AG04450 (cell line): ENCODE measurements at regions of chr17 and their contacts with region 1.

Region 1: GRCh38 chr17:28552246-28552999 is at the start of gene UNC119:
- DNase-seq: no peak
- H3K4me3 ChIP-seq: peak within 1 kb of the TSS; percentile 74
- H3K27ac ChIP-seq: peak within 1 kb of the TSS; percentile 31
- H3K27me3 ChIP-seq: no peaks in the 10 kb centered on the region
- CTCF ChIP-seq: no peak
- polyA plus RNA-seq, gene UNC119: 51.2 and 54.3 TPM in 2 replicates

Region 2: GRCh38 chr17:28494445-28495188 is 57.8 kb before region 1 on chr17:
- CTCF ChIA-PET with region 1: interaction called, 15 read pairs
- POLR2A ChIA-PET with region 1: no interaction called
- DNase-seq: peak; percentile 13
- H3K4me3 ChIP-seq: no peak overlapping the region
- H3K27ac ChIP-seq: no peak overlapping the region
- H3K27me3 ChIP-seq: peaks cover 22% of the 10 kb centered on the region
- CTCF ChIP-seq: peak; percentile 93

Region 3: GRCh38 chr17:28540231-28540630 is 12.2 kb before region 1 on chr17:
- CTCF ChIA-PET with region 1: interaction called, 11 read pairs
- POLR2A ChIA-PET with region 1: no interaction called
- DNase-seq: no peak
- H3K4me3 ChIP-seq: no peak overlapping the region
- H3K27ac ChIP-seq: no peak overlapping the region
- H3K27me3 ChIP-seq: peaks cover 22% of the 10 kb centered on the region
- CTCF ChIP-seq: no peak

Region 4: DNA sequence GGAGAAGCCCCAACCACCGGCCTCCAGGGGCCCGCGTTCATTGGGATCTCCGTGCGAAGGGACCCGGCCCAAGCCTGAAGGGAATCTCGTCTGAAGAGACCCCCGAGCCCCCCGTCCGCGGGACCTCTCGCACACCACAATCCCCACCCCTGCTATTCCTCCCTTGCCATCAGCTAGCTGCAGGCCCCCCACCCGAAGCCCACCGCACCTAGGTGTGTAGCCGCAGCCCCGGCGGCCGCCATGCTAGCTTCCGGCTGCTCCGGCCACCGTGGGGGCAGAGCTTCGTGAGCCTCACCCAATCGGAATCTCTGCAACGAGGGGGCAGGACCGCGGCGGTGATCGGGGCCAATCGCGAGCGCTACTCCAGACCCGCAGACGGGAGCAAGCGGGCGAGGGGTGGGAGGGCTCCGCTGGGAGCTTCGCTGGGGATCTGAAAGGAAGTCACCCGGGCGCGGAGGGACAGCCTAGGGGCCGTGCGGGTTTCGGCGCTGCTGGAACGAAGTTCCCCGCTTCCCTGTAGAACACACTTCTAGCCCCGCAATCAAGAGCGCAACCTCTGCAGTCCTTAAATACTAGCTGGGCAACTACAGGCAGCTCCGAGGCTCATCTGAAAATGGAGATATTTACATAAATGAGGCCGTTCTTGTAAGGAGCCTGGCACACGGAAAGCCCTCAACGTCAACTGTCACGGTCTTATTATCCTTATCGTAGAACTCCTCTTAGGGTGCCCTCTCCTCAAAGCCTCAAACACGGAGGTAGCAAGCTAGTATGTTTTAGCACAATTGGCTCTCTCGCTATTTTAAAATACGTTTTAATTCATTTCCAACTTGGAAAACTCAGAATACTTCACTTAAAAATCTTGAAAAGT is 19.1 kb after region 1 on chr17 and contains the start of gene PIGS:
- CTCF ChIA-PET with region 1: interaction called, 3 read pairs
- POLR2A ChIA-PET with region 1: interaction called, 10 read pairs
- DNase-seq: peak; percentile 66
- H3K4me3 ChIP-seq: peak within 1 kb of the TSS; percentile 99
- H3K27ac ChIP-seq: no peak within 1 kb of the TSS
- H3K27me3 ChIP-seq: no peaks in the 10 kb centered on the region
- CTCF ChIP-seq: no peak
- polyA plus RNA-seq, gene PIGS: 51.8 and 64.8 TPM in 2 replicates